Ascending aorta (tissue), 2 donors: ENCODE measurements at regions of chr3 and their contacts with region 1.

Region 1: GRCh38 chr3:134308350-134308891 is 57.8 kb upstream of the RYK start:
- DNase-seq: peak in 1 of 2 donors; percentile 91
- H3K4me3 ChIP-seq: peak overlapping the region in 1 of 2 donors; percentile 27
- H3K27ac ChIP-seq: peak overlapping the region; percentile 94 to 97
- H3K4me1 ChIP-seq: peaks cover 4 to 26% of the 10 kb centered on the region in 2 donors
- H3K27me3 ChIP-seq: no peaks in the 10 kb centered on the region
- CTCF ChIP-seq: peak; percentile 99 to 100 (median 99)

Region 2: GRCh38 chr3:134250717-134251220 is 57.7 kb before region 1 on chr3 and contains the start of gene RYK:
- intact Hi-C with region 1: loop called (anchors 5 kb)
- DNase-seq: peak; percentile 32 to 88
- H3K4me3 ChIP-seq: peak within 1 kb of the TSS; percentile 85 to 98
- H3K27ac ChIP-seq: peak within 1 kb of the TSS; percentile 87 to 98
- H3K4me1 ChIP-seq: peaks cover 0 to 15% of the 10 kb centered on the region in 2 donors
- H3K27me3 ChIP-seq: no peaks in the 10 kb centered on the region
- CTCF ChIP-seq: no peak
- total RNA-seq, gene RYK: 13.5 TPM

Region 3: GRCh38 chr3:134364061-134364935 is 55.9 kb after region 1 on chr3:
- intact Hi-C with region 1: loop called (anchors 2 kb)
- DNase-seq: peak; percentile 75 to 98
- H3K4me3 ChIP-seq: peak overlapping the region; percentile 24 to 44
- H3K27ac ChIP-seq: peak overlapping the region; percentile 92 to 93
- H3K4me1 ChIP-seq: peaks cover 28 to 97% of the 10 kb centered on the region in 2 donors
- H3K27me3 ChIP-seq: no peaks in the 10 kb centered on the region
- CTCF ChIP-seq: no peak

Region 4: GRCh38 chr3:134373994-134374790 is 65.8 kb after region 1 on chr3 and contains the start of gene AMOTL2:
- intact Hi-C with region 1: loop called (anchors 1 kb)
- DNase-seq: peak in 1 of 2 donors; percentile 93
- H3K4me3 ChIP-seq: peak within 1 kb of the TSS; percentile 70 to 90
- H3K27ac ChIP-seq: peak within 1 kb of the TSS; percentile 93 to 99
- H3K4me1 ChIP-seq: peaks cover 24 to 36% of the 10 kb centered on the region in 2 donors
- H3K27me3 ChIP-seq: no peaks in the 10 kb centered on the region
- CTCF ChIP-seq: no peak
- total RNA-seq, gene AMOTL2: 156 TPM

Region 5: DNA sequence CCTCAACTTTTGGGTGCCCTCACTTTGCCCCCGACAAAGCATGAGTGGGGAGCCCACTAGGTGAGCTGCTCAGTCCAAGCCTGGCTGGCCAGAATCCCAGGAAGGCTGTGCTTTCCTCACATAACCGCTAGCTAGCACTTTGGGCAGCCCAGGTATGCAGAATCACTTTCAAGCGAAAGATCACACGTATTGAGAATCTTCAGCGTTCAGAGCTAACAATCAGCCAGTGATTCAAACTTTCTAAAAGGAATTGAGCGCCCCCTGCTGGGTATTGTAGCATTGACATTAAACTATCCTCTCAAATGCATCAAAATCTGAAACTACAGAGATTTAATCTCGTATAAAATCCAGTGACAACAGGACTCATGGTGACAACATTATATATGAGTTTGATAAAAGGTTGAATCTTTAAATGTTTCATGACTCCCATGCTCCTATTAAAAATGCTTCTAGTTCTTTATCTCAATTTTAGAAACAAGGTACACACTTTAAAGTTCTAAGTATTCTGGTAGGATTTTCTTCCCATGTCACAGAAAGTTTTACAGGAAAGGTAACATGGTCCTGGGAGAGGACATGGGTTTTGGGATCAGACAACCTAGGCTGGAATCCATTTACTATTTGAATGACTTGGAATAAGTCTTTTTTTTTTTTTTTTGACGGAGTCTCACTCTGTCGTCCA is 165.6 kb after region 1 on chr3:
- intact Hi-C with region 1: loop called (anchors 1 kb)
- DNase-seq: peak in 1 of 2 donors; percentile 91
- H3K4me3 ChIP-seq: no peak overlapping the region
- H3K27ac ChIP-seq: no peak overlapping the region
- H3K4me1 ChIP-seq: peaks cover 0 to 4% of the 10 kb centered on the region in 2 donors
- H3K27me3 ChIP-seq: no peaks in the 10 kb centered on the region
- CTCF ChIP-seq: peak; percentile 76 to 81 (median 77)